ENCODE measurements at regions of chr3 and their contacts with region 1.

Region 1: GRCh38 chr3:48400824-48401433 is 28.9 kb downstream of the FBXW12 start:
- DNase-seq: peak; percentile 73
- ATAC-seq: peak; percentile 17
- H3K4me3 ChIP-seq: no peak overlapping the region
- H3K27ac ChIP-seq: no peak overlapping the region
- H3K4me1 ChIP-seq: peaks cover 17% of the 10 kb centered on the region
- H3K27me3 ChIP-seq: no peaks in the 10 kb centered on the region
- CTCF ChIP-seq: peak; percentile 85
- EP300 ChIP-seq: no peak
- POLR2A ChIP-seq: 0 out of 4 replicates have a peak, but pooled peaks of 1 of the 2 experiments have one; percentile 1
- RAD21 ChIP-seq: peak; percentile 87

Region 2: DNA sequence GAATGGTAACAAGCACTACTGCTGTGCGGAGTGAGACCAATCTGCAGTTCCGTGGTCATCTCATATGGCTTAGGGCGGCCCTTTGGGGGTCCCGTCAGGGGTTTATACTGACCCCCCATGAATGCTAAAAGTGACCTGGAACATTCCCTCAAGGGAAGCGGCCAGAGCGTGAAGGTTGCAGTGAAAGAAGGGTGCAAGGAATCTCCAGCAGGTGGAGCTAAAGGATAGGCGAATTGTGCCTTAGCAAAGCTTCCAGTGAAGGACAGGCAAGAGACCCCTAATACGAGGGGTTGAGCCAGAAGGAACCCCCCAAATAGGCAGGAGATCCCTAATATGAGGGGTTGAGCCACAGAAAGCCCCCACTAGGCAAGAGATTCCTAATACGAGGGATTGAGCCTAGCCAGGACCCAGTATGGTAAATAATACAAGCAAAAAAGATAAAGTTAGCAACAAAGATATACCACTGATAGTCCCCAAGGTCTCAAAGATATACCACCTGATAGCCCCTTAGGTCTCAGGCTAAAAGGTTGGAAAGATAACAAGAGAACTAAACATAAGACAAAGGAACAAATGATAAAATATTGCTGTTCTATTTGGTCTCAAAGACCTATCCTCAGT is 127.2 kb before region 1 on chr3:
- CTCF ChIA-PET with region 1: interaction called, 9 read pairs
- POLR2A ChIA-PET with region 1: no interaction called
- in situ Hi-C with region 1: no loop called
- intact Hi-C with region 1: loop called (anchors 2 kb)
- DNase-seq: peak; percentile 66
- ATAC-seq: peak; percentile 85
- H3K4me3 ChIP-seq: no peak overlapping the region
- H3K27ac ChIP-seq: no peak overlapping the region
- H3K4me1 ChIP-seq: no peaks in the 10 kb centered on the region
- H3K27me3 ChIP-seq: no peaks in the 10 kb centered on the region; a peak in 1 of 5 replicates
- CTCF ChIP-seq: peak; percentile 90
- EP300 ChIP-seq: no peak
- POLR2A ChIP-seq: no peak
- RAD21 ChIP-seq: peak; percentile 81

Region 3: DNA sequence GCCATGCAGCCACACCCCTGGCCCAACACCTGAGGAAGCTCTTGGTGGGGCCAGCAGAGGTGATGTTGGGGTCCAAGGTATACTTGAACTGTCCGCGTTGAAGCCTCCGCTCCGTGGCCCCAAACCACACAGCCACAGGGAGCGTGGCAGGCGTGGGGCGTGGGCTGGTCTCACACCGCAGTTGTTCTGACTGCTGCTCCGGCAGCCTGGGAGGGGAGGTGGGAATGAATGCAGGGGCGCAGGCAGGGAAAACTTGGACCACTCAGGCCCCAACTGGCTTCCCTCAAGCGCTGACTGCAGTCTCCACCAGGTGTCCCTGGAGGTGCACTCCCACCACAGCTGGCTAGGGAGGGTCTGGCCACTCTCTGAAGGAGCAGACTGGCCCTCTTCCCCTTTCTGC is 14.6 kb after region 1 on chr3:
- CTCF ChIA-PET with region 1: no interaction called
- POLR2A ChIA-PET with region 1: interaction called, 10 read pairs
- in situ Hi-C with region 1: no loop called
- intact Hi-C with region 1: no loop called
- DNase-seq: no peak
- ATAC-seq: peak; percentile 30
- H3K4me3 ChIP-seq: no peak overlapping the region
- H3K27ac ChIP-seq: no peak overlapping the region
- H3K4me1 ChIP-seq: no peaks in the 10 kb centered on the region
- H3K27me3 ChIP-seq: no peaks in the 10 kb centered on the region
- CTCF ChIP-seq: peak; percentile 56
- EP300 ChIP-seq: no peak
- POLR2A ChIP-seq: no peak
- RAD21 ChIP-seq: peak; percentile 60

Region 4: GRCh38 chr3:48429317-48429959 is 28.5 kb after region 1 on chr3:
- CTCF ChIA-PET with region 1: interaction called, 117 read pairs
- POLR2A ChIA-PET with region 1: interaction called, 71 read pairs
- in situ Hi-C with region 1: no loop called
- intact Hi-C with region 1: no loop called
- DNase-seq: peak; percentile 50
- ATAC-seq: peak; percentile 4
- H3K4me3 ChIP-seq: peak overlapping the region; percentile 79 to 93 (median 86)
- H3K27ac ChIP-seq: peak overlapping the region; percentile 99
- H3K4me1 ChIP-seq: peaks cover 84% of the 10 kb centered on the region
- H3K27me3 ChIP-seq: no peaks in the 10 kb centered on the region
- CTCF ChIP-seq: no peak
- EP300 ChIP-seq: no peak
- POLR2A ChIP-seq: no peak; a peak in 1 of 4 replicates
- RAD21 ChIP-seq: peak; percentile 40

Region 5: DNA sequence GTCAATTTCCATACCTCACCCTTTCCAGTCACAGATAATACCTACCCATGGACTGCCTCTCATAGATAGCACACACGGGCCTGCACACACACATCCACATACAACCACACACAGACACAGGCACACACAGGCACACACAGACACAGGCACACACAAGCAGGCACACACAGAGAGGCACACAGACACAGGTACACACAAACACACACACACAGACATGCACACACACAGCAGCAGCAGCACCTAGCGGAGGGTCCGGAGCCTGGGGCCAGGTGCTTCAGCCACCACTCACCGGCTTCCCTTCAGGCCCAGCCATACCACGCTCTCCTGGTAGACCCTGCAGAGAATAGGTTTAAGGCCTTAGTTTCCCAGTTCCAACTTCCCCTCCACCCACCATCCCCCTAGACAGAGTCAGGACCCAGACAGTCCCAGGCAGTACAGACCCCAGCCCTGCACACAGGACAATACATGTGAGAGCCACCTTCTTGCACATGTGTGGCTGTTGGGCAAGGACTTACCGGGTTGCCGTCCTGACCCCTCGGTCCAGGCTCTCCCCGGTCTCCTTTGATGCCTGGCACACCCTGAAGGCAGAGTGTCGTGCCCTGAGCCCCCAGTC is 173.2 kb after region 1 on chr3:
- CTCF ChIA-PET with region 1: no interaction called
- POLR2A ChIA-PET with region 1: no interaction called
- in situ Hi-C with region 1: no loop called
- intact Hi-C with region 1: no loop called
- DNase-seq: no peak
- ATAC-seq: peak; percentile 31
- H3K4me3 ChIP-seq: no peak overlapping the region
- H3K27ac ChIP-seq: no peak overlapping the region
- H3K4me1 ChIP-seq: peaks cover 55% of the 10 kb centered on the region
- H3K27me3 ChIP-seq: no peaks in the 10 kb centered on the region
- CTCF ChIP-seq: peak; percentile 37
- EP300 ChIP-seq: no peak
- POLR2A ChIP-seq: no peak
- RAD21 ChIP-seq: no peak

Measured in HepG2 (cell line).